ENCODE measurements at regions of chr10 and their contacts with region 1.

Region 1: DNA sequence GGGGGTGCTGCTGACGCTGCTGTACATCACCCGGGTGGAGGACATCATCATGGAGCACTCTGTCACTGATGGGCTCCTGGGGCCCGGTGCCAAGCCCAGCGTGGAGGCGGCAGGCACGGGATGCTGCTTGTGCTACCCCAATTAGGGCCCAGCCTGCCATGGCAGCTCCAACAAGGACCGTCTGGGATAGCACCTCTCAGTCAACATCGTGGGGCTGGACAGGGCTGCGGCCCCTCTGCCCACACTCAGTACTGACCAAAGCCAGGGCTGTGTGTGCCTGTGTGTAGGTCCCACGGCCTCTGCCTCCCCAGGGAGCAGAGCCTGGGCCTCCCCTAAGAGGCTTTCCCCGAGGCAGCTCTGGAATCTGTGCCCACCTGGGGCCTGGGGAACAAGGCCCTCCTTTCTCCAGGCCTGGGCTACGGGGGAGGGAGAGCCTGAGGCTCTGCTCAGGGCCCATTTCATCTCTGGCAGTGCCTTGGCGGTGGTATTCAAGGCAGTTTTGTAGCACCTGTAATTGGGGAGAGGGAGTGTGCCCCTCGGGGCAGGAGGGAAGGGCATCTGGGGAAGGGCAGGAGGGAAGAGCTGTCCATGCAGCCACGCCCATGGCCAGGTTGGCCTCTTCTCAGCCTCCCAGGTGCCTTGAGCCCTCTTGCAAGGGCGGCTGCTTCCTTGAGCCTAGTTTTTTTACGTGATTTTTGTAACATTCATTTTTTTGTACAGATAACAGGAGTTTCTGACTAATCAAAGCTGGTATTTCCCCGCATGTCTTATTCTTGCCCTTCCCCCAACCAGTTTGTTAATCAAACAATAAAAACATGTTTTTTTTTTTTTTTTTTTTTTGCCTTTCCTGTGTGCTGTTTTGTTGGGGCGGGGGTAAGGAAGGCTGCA is 55.8 kb downstream of the TSPAN15 start:
- DNase-seq: no peak
- H3K4me3 Mint-ChIP-seq: no peak overlapping the region
- H3K27ac Mint-ChIP-seq: peak overlapping the region; percentile 33
- H3K4me1 Mint-ChIP-seq: no peaks in the 10 kb centered on the region
- H3K27me3 Mint-ChIP-seq: no peaks in the 10 kb centered on the region
- CTCF ChIP-seq: no peak

Region 2: GRCh38 chr10:67935223-67935622 is 1571.9 kb before region 1 on chr10:
- CTCF ChIA-PET with region 1: interaction called, 10 read pairs
- intact Hi-C with region 1: no loop called
- DNase-seq: no peak
- H3K4me3 Mint-ChIP-seq: no peak overlapping the region
- H3K27ac Mint-ChIP-seq: no peak overlapping the region
- H3K4me1 Mint-ChIP-seq: no peaks in the 10 kb centered on the region
- H3K27me3 Mint-ChIP-seq: no peaks in the 10 kb centered on the region
- CTCF ChIP-seq: no peak

Region 3: DNA sequence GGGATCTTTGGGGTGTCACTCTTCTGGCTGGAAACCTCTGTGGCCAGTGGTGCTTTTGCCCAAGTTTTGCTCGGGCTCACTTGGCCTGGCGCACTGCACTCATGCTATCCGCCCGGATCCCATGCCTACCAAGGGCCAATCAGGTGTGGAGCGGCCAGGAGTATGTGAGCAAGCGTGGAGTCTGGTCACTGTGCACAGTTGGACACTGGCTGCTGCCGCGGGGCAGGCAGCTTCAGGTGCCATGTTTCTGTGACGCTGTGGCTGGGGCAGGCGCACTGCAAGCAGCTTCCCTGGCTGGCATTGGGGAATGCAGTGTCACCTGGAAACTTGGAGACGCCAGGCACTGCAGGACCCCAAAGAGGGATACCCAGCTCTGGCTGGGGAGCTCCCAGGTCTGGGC is 20.9 kb after region 1 on chr10:
- CTCF ChIA-PET with region 1: no interaction called
- intact Hi-C with region 1: no loop called
- DNase-seq: no peak
- H3K4me3 Mint-ChIP-seq: no peak overlapping the region
- H3K27ac Mint-ChIP-seq: no peak overlapping the region
- H3K4me1 Mint-ChIP-seq: no peaks in the 10 kb centered on the region
- H3K27me3 Mint-ChIP-seq: peaks cover 19% of the 10 kb centered on the region
- CTCF ChIP-seq: no peak

Region 4: GRCh38 chr10:69861251-69862240 is 354.5 kb after region 1 on chr10:
- CTCF ChIA-PET with region 1: no interaction called
- intact Hi-C with region 1: no loop called
- DNase-seq: peak; percentile 80
- H3K4me3 Mint-ChIP-seq: peak overlapping the region; percentile 38
- H3K27ac Mint-ChIP-seq: peak overlapping the region; percentile 96
- H3K4me1 Mint-ChIP-seq: peaks cover 58% of the 10 kb centered on the region
- H3K27me3 Mint-ChIP-seq: peaks cover 5% of the 10 kb centered on the region
- CTCF ChIP-seq: peak; percentile 68